ENCODE measurements at regions of chr15 and their contacts with region 1.

Region 1: DNA sequence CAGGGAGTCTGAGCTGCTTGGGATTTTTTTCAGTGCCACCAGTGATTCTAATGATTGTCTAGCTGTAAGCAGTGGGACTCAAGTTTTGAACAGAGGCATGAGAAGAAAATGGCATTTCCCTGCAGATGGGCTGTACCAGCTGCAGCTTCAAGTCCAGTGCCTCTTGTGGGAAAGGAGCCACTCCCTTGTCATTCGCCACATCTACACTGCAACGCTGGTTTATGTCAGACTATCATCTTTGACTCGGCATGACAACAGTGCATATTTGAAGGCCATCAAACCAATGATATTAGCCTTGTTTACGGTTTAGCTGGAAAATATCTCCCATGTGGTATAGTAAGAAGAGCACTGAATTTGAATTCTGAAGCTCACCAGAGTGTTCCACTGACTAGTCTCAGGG is 22.2 kb downstream of the SCG5 start:
- DNase-seq: no peak
- H3K4me3 ChIP-seq: no peak overlapping the region
- H3K27ac ChIP-seq: no peak overlapping the region
- H3K27me3 ChIP-seq: no peaks in the 10 kb centered on the region
- CTCF ChIP-seq: no peak

Region 2: GRCh38 chr15:32641517-32642059 is 22.1 kb before region 1 on chr15 and contains the start of gene SCG5:
- CTCF ChIA-PET with region 1: interaction called, 24 read pairs
- POLR2A ChIA-PET with region 1: no interaction called
- DNase-seq: no peak
- H3K4me3 ChIP-seq: peak within 1 kb of the TSS; percentile 50
- H3K27ac ChIP-seq: no peak within 1 kb of the TSS
- H3K27me3 ChIP-seq: no peaks in the 10 kb centered on the region
- CTCF ChIP-seq: no peak
- polyA plus RNA-seq, gene SCG5: 39.2 and 44.4 TPM in 2 replicates

Region 3: DNA sequence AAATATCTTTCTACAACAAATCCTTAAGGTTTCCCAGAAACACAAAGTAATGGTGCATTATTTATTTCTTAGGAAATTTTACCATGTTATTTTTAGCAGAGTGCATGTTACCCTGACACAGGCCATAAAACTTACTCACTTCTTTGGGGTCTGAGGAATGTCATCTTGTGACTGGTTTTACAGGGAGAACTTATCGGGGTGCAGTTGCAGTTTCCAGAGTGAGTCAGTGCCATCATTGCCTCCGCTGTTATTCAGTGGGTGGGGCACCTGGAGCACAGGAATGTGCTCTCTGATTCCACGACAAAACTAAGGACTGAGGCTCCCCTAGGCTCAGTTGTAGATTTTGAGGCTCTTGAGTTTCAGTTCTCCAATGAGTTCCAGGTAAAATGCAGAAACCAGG is 43.0 kb after region 1 on chr15:
- CTCF ChIA-PET with region 1: interaction called, 16 read pairs
- POLR2A ChIA-PET with region 1: no interaction called
- DNase-seq: no peak
- H3K4me3 ChIP-seq: no peak overlapping the region
- H3K27ac ChIP-seq: no peak overlapping the region
- H3K27me3 ChIP-seq: no peaks in the 10 kb centered on the region
- CTCF ChIP-seq: no peak

Region 4: GRCh38 chr15:32730677-32731654 is 67.3 kb after region 1 on chr15:
- CTCF ChIA-PET with region 1: interaction called, 11 read pairs
- POLR2A ChIA-PET with region 1: interaction called, 4 read pairs
- DNase-seq: no peak
- H3K4me3 ChIP-seq: peak overlapping the region; percentile 17; the same call in 1 of the 2 replicates
- H3K27ac ChIP-seq: peak overlapping the region; percentile 55
- H3K27me3 ChIP-seq: no peaks in the 10 kb centered on the region
- CTCF ChIP-seq: no peak

Region 5: GRCh38 chr15:33132722-33133345 is 469.2 kb after region 1 on chr15:
- CTCF ChIA-PET with region 1: interaction called, 29 read pairs
- POLR2A ChIA-PET with region 1: no interaction called
- DNase-seq: peak; percentile 61
- H3K4me3 ChIP-seq: no peak overlapping the region
- H3K27ac ChIP-seq: no peak overlapping the region
- H3K27me3 ChIP-seq: no peaks in the 10 kb centered on the region
- CTCF ChIP-seq: peak; percentile 89